Heart left ventricle (tissue), 16 donors: ENCODE measurements at regions of chr22 and their contacts with region 1.

Region 1: GRCh38 chr22:31107178-31107893 is at the start of gene SELENOM:
- DNase-seq: peak; percentile 97 to 98 (median 97)
- ATAC-seq: peak; percentile 92 to 95 (median 94)
- H3K4me3 ChIP-seq: peak within 1 kb of the TSS; percentile 56 to 95 (median 74)
- H3K27ac ChIP-seq: peak within 1 kb of the TSS; percentile 88 to 99 (median 93)
- H3K4me1 ChIP-seq: peaks cover 0 to 45% (median 20%) of the 10 kb centered on the region in 12 donors
- H3K27me3 ChIP-seq: no peaks in the 10 kb centered on the region
- CTCF ChIP-seq: peak; percentile 88 to 99 (median 96)
- POLR2A ChIP-seq: peak in 1 of 2 donors; percentile 83
- total RNA-seq, gene SELENOM: 35.0 to 183 (median 52.9) TPM

Region 2: GRCh38 chr22:31272522-31273446 is 165.4 kb after region 1 on chr22:
- intact Hi-C with region 1: loop called in 2 of 10 experiments (anchors 5 to 10 kb)
- DNase-seq: peak in 2 of 5 donors; percentile 44 to 54
- ATAC-seq: peak; percentile 56 to 78 (median 75)
- H3K4me3 ChIP-seq: no peak overlapping the region
- H3K27ac ChIP-seq: no peak overlapping the region
- H3K4me1 ChIP-seq: peaks cover 0 to 17% (median 4%) of the 10 kb centered on the region in 12 donors
- H3K27me3 ChIP-seq: no peaks in the 10 kb centered on the region
- CTCF ChIP-seq: peak; percentile 63 to 81 (median 70)
- POLR2A ChIP-seq: no peak